ENCODE measurements at regions of chr9 and their contacts with region 1.

Region 1: DNA sequence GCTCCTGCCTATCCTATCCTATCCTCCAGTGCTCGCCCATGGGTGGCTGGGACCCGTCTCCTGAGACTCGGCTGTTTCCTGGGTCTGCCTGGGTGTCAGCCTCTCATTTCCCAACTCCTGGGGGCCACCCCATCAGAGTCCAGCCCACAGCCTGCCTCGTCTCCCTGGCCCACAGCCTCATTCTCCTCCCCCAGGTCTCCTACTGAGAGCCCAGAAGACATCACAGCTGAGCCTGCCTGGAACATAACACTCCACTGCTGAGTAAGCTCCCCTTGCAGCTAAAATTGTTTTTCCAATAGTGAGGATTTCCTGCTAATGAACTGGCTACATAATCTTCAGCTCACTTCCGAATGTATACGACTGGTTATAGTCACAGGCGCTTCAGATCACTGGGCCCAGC is 95.3 kb downstream of the TTLL11 start:
- DNase-seq: no peak
- ATAC-seq: peak in 1 of 2 donors; percentile 31

Region 2: GRCh38 chr9:121634329-121635261 is 363.2 kb before region 1 on chr9:
- intact Hi-C with region 1: loop called in 1 of 2 experiments (anchors 5 kb)
- DNase-seq: no peak
- ATAC-seq: peak; percentile 56 to 70